Activated T-helper 2 cell treated with anti-CD3 and anti-CD28 coated beads, Interferon-gamma antibody, Interleukin-2, Interleukin-4, amounts not matched to agents 10 μg/mL and 5 μg/mL and 100 μg/mL, durations not matched to agents 14 hours and 24 hours and 36 hours (primary cell): ENCODE measurements at regions of chr2 and their contacts with region 1.

Region 1: GRCh38 chr2:41782306-41783158 is 265.3 kb upstream of the PKDCC start:
- DNase-seq: no peak
- H3K4me3 Mint-ChIP-seq: no peak overlapping the region
- H3K27ac Mint-ChIP-seq: no peak overlapping the region
- H3K4me1 Mint-ChIP-seq: no peaks in the 10 kb centered on the region
- H3K27me3 Mint-ChIP-seq: peaks cover 2% of the 10 kb centered on the region

Region 2: GRCh38 chr2:41414486-41415230 is 367.9 kb before region 1 on chr2:
- intact Hi-C with region 1: loop called (anchors 5 kb)
- DNase-seq: no peak
- H3K4me3 Mint-ChIP-seq: no peak overlapping the region
- H3K27ac Mint-ChIP-seq: no peak overlapping the region
- H3K4me1 Mint-ChIP-seq: no peaks in the 10 kb centered on the region
- H3K27me3 Mint-ChIP-seq: no peaks in the 10 kb centered on the region

Region 3: DNA sequence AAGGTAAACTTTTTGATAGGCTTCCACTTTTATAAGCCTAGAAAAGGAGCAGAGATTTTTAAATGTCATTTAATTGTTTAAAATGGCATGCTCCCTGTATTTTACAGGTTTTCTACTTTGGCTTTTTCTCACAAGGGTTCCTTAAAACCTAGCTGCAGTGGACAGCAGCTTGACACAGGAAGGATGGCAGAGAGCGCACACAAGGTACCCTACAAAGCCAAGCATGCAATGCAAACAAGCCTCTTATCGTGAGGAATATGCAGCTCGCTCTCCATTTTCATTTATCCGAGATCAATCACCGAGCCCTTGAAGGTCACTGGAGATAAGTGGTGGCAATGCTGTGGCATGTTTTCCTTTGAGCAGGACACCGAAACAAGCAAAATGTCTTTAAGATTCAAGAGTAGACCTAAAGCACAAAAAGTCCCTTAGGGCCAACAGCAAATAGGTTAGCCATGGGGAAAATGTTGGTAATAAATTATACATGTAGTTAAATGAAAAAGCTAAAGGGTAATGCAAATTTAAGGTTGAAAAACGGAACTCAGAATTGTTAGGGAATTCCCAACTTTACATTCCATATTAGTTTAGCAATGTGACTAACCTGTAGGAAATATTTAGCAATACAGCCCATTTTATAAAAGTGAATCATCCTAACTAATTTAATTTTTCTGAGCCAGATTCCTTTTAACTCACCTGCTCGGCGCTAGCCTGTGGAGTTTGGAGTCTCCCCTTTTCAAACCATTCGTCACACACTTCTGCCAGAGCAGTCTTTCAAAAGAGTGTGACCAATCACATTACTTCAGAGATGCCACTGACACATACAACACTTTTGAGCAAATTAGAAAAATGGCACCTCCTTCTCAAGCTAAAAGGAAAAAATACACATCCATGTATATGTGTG is 72.6 kb before region 1 on chr2:
- intact Hi-C with region 1: loop called (anchors 10 kb)
- DNase-seq: no peak
- H3K4me3 Mint-ChIP-seq: no peak overlapping the region
- H3K27ac Mint-ChIP-seq: no peak overlapping the region
- H3K4me1 Mint-ChIP-seq: peaks cover 1% of the 10 kb centered on the region
- H3K27me3 Mint-ChIP-seq: peaks cover 5% of the 10 kb centered on the region